Gastrocnemius medialis (tissue), 4 donors: ENCODE measurements at regions of chr20 and their contacts with region 1.

Region 1: DNA sequence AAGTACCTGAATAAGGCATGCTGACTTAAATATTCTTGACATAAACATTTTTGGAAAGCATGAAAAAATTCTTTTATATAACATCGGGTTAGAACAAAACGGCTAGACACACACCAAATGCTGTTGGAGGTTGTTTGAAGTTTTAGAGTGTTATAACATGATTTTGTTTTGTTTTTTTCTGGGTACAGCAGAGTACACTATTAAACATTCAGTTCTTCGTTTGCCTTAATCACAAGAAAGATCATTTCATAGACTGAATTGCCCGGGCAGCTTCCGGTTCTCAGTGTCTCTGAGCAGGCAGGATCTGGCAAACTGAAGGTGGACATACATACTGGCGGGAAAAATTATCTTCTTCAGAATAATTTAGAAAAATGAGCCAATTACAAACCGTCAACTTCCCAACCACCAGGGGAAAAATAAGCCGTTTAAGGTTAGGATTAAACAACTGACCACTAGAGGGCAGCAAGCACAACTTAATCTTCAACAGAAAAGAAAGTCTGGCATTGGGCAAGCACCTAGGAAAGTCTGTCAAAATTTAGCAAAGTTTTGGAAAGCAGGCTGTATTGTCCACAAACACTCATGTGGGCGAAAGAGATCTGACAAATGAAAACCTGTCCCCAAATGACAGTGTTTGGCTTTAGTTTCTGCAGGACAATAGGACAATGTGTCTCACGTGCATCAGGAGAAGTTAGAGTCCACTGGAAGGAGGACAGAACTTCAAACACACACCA is 15.0 kb downstream of the ZNF217 start:
- DNase-seq: peak; percentile 30 to 53
- ATAC-seq: peak; percentile 84 to 88
- H3K4me3 ChIP-seq: peak overlapping the region; percentile 16 to 41 (median 30)
- H3K27ac ChIP-seq: peak overlapping the region; percentile 39 to 72 (median 60)
- H3K4me1 ChIP-seq: peaks cover 26 to 51% of the 10 kb centered on the region in 2 donors
- H3K27me3 ChIP-seq: no peaks in the 10 kb centered on the region
- CTCF ChIP-seq: peak; percentile 85 to 96 (median 91)
- POLR2A ChIP-seq: no peak

Region 2: DNA sequence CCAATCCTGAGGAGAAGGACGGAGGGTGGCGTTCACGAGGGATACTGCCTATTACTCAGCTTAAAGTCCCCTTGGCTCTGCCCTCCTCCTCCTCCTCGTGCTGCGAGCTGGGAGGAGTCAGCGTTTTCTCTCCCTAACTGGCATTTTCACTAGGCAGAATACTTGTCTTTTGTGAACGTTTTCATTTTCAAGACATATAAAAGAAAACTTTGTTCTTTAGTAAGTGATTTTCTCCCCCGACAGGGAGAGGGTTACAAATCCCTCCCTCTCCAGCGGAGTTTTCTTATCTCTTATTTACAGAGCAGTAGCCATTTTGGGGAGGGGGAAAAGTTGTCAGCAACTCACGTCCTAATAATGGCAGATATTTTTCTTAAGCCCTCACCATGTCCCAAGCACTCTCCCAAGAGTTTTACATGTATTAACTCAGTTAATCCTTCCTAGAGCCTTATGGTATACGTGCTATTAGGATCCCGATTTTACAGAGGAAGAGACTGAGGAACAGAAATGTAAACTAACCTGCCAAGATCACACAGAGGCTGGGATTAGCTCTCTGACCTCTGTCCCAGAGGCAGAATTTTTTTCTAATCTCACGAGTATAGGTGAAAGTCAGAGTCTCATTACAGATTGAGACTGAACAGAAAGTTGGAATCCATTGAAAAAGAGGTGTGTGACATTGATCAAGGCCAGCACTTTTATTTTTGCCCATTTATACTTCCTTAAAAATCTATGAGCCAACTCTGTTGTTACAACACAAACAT is 45.0 kb after region 1 on chr20:
- in situ Hi-C with region 1: no loop called
- intact Hi-C with region 1: loop called (anchors 5 kb)
- DNase-seq: peak; percentile 77 to 83
- ATAC-seq: peak; percentile 94 to 96
- H3K4me3 ChIP-seq: peak overlapping the region; percentile 43 to 60 (median 58)
- H3K27ac ChIP-seq: peak overlapping the region; percentile 67 to 88 (median 85)
- H3K4me1 ChIP-seq: peaks cover 19 to 27% of the 10 kb centered on the region in 2 donors
- H3K27me3 ChIP-seq: no peaks in the 10 kb centered on the region
- CTCF ChIP-seq: no peak
- POLR2A ChIP-seq: peak; percentile 3 to 56

Region 3: GRCh38 chr20:53763707-53764414 is 185.2 kb after region 1 on chr20:
- in situ Hi-C with region 1: no loop called
- intact Hi-C with region 1: no loop called
- DNase-seq: no peak
- ATAC-seq: no peak
- H3K4me3 ChIP-seq: no peak overlapping the region
- H3K27ac ChIP-seq: no peak overlapping the region
- H3K4me1 ChIP-seq: no peaks in the 10 kb centered on the region
- H3K27me3 ChIP-seq: no peaks in the 10 kb centered on the region
- CTCF ChIP-seq: no peak
- POLR2A ChIP-seq: no peak

Region 4: DNA sequence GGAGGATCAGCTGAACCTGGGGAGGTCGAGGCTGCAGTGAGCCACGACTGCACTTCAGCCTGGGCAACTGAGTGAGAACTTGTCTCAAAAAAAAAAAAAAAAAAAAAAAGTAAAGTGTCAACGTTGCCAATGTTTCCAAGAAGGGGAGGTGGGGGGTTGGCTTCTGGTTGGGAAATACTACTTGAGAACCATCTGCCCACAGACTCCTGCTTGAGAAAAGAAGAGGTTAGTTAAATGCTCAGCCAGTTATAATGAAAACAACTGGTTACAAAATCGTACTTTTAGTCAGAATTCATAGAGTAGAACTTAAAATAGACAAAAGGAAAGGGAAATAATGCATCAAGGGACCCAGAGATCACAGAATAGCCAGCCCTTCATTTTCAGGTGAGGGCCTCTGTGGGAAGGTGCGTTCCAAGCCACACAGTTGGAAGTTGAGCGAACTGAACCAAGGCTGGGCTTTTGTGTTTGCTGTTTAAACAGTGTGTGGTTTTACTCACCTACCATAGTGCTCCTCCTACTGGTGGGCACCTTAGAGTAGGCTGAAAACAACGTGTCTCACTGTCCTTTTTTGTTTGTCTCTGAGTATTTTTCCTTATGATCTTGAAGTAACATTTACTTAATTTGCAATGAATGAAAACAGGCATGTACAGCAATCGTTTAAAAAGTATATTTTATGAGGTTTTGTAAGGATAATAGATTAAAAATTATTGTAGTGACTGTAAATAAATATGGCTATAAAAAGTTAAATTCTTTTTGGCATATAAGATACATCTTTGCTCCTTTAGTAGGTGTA is 291.0 kb after region 1 on chr20:
- in situ Hi-C with region 1: no loop called
- intact Hi-C with region 1: loop called (anchors 1 kb)
- DNase-seq: peak; percentile 33 to 38
- ATAC-seq: peak; percentile 80 to 95
- H3K4me3 ChIP-seq: no peak overlapping the region
- H3K27ac ChIP-seq: peak overlapping the region in 2 of 4 donors; percentile 13 to 45
- H3K4me1 ChIP-seq: peaks cover 5 to 23% of the 10 kb centered on the region in 2 donors
- H3K27me3 ChIP-seq: no peaks in the 10 kb centered on the region
- CTCF ChIP-seq: peak; percentile 42 to 74 (median 62)
- POLR2A ChIP-seq: no peak

Region 5: GRCh38 chr20:53934421-53935343 is 356.0 kb after region 1 on chr20:
- in situ Hi-C with region 1: loop called in 2 of 4 experiments (anchors 5 kb)
- intact Hi-C with region 1: no loop called
- DNase-seq: no peak
- ATAC-seq: no peak
- H3K4me3 ChIP-seq: no peak overlapping the region
- H3K27ac ChIP-seq: peak overlapping the region; percentile 21 to 78 (median 66)
- H3K4me1 ChIP-seq: peaks cover 11 to 25% of the 10 kb centered on the region in 2 donors
- H3K27me3 ChIP-seq: no peaks in the 10 kb centered on the region
- CTCF ChIP-seq: no peak
- POLR2A ChIP-seq: no peak

Region 6: GRCh38 chr20:54062812-54063280 is 484.2 kb after region 1 on chr20:
- in situ Hi-C with region 1: loop called in 1 of 4 experiments (anchors 25 kb)
- intact Hi-C with region 1: loop called (anchors 10 kb)
- DNase-seq: no peak
- ATAC-seq: peak; percentile 36 to 39
- H3K4me3 ChIP-seq: no peak overlapping the region
- H3K27ac ChIP-seq: no peak overlapping the region
- H3K4me1 ChIP-seq: no peaks in the 10 kb centered on the region
- H3K27me3 ChIP-seq: no peaks in the 10 kb centered on the region
- CTCF ChIP-seq: peak in 3 of 5 experiments; percentile 25 to 41 (median 25)
- POLR2A ChIP-seq: no peak